Activated T-helper 1 cell treated with anti-CD3 and anti-CD28 coated beads, Interleukin-12 subunit alpha, Interleukin-12 subunit beta, Interleukin-2, Interleukin-4 antibody, amounts not matched to agents 30 ng/mL and 10 ng/mL and 1 ng/mL, durations not matched to agents 14 hours and 24 hours and 36 hours (primary cell): ENCODE measurements at regions of chr3 and their contacts with region 1.

Region 1: DNA sequence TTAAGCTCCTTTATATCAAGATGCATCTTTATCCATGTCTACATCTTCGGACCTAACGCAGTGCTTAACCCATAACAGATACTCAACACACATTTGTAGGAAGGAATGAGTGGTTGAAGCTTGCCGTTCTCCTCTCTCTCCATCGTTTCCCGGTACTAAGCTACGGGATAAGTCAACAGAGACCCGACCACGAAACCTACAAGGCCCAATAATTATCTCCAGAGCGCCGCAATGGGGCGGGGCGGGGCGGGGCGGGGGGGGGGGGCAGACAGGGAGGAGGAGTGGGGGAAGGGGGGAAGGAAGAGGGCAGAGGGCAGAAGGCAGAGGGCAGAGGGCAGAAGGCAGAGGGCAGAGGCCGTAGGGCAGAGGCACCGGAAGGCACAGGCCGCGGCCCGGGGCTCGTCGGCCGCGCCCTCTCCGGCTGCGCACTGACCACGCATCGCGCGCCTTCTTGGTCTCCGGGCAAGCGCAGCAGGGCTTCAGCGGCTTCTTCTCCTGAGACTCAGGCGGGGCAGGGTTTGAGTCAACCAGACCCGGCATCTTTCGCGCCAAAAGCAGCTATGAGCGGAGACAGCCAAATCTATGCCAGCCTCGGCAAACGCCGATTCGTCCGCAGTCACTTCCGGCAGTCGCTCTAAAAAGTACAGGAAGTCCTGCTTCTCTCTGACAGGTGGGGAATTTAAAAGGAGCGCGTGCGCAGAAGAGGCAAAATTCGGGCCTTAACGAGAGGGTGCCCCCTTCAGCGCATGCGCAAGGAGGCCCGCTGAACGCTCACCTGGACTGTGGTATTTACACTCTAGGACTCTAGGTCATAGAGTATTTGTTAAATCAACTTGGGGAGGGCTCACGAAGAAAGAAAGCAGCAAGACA is at the start of gene COX17:
- DNase-seq: peak; percentile 95
- H3K4me3 Mint-ChIP-seq: peak within 1 kb of the TSS; percentile 91
- H3K27ac Mint-ChIP-seq: peak within 1 kb of the TSS; percentile 96
- H3K4me1 Mint-ChIP-seq: peaks cover 44% of the 10 kb centered on the region
- H3K27me3 Mint-ChIP-seq: peaks cover 2% of the 10 kb centered on the region
- total RNA-seq, gene COX17: 62.2 and 70.7 TPM in 2 replicates

Region 2: GRCh38 chr3:119145500-119146191 is 531.4 kb before region 1 on chr3 and contains the start of gene TEX55:
- intact Hi-C with region 1: loop called (anchors 1 kb)
- DNase-seq: no peak
- H3K4me3 Mint-ChIP-seq: no peak within 1 kb of the TSS
- H3K27ac Mint-ChIP-seq: no peak within 1 kb of the TSS
- H3K4me1 Mint-ChIP-seq: no peaks in the 10 kb centered on the region
- H3K27me3 Mint-ChIP-seq: no peaks in the 10 kb centered on the region
- total RNA-seq, gene TEX55: not detected in 2 replicates

Region 3: GRCh38 chr3:119322835-119323722 is 353.9 kb before region 1 on chr3:
- intact Hi-C with region 1: loop called (anchors 1 kb)
- DNase-seq: peak; percentile 92
- H3K4me3 Mint-ChIP-seq: peak overlapping the region; percentile 80
- H3K27ac Mint-ChIP-seq: peak overlapping the region; percentile 92
- H3K4me1 Mint-ChIP-seq: peaks cover 52% of the 10 kb centered on the region
- H3K27me3 Mint-ChIP-seq: peaks cover 27% of the 10 kb centered on the region

Region 4: DNA sequence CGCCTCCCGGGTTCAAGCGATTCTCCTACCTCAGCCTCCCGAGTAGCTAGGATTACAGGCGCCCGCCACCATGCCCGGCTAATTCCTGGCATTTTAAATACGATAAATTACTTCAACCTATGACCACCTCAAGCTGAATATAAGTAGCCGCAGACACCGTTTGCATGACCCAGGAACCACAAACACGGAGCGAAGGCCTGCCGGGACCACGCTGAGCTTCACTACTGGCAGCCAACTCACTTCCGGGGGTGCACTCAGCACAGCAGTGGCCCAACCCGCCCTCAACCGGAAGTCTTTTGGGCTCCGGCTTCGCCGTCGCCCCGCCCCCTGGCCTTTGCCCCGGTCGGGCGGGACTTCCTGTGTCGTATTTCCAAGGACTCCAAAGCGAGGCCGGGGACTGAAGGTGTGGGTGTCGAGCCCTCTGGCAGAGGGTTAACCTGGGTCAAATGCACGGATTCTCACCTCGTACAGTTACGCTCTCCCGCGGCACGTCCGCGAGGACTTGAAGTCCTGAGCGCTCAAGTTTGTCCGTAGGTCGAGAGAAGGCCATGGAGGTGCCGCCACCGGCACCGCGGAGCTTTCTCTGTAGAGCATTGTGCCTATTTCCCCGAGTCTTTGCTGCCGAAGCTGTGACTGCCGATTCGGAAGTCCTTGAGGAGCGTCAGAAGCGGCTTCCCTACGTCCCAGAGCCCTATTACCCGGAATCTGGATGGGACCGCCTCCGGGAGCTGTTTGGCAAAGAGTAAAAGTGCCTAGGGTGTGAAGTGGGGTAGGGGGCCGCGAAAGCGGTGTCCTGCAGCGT is 178.6 kb before region 1 on chr3 and contains the start of gene TIMMDC1:
- intact Hi-C with region 1: loop called (anchors 1 kb)
- DNase-seq: peak; percentile 96
- H3K4me3 Mint-ChIP-seq: peak within 1 kb of the TSS; percentile 100
- H3K27ac Mint-ChIP-seq: peak within 1 kb of the TSS; percentile 99
- H3K4me1 Mint-ChIP-seq: peaks cover 33% of the 10 kb centered on the region
- H3K27me3 Mint-ChIP-seq: no peaks in the 10 kb centered on the region
- total RNA-seq, gene TIMMDC1: 124 and 126 TPM in 2 replicates

Region 5: DNA sequence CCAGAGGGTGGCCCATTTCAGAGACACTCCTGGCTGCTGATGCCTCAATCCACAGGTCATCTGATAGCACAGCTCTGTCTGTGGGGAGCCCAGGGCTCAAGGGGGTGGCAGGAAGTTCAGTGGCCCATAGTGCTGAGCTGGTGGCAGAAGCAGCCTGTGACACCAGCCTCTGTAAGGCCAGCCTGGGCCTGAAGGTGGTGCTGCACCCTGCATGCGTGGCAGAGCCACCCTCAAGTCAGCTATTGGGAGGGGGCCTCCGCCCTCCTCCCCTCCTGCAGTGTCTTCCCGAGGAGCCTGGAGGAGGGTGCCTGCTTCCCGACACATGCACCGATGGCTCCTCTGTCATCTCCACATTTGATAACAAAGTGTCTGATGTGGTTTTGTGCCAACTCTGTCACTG is 76.3 kb before region 1 on chr3:
- intact Hi-C with region 1: loop called (anchors 2 kb)
- DNase-seq: no peak
- H3K4me3 Mint-ChIP-seq: no peak overlapping the region
- H3K27ac Mint-ChIP-seq: peak overlapping the region; percentile 61
- H3K4me1 Mint-ChIP-seq: peaks cover 41% of the 10 kb centered on the region
- H3K27me3 Mint-ChIP-seq: no peaks in the 10 kb centered on the region

Region 6: GRCh38 chr3:119715105-119715504 is 38.1 kb after region 1 on chr3:
- intact Hi-C with region 1: no loop called
- DNase-seq: no peak
- H3K4me3 Mint-ChIP-seq: no peak overlapping the region
- H3K27ac Mint-ChIP-seq: no peak overlapping the region
- H3K4me1 Mint-ChIP-seq: no peaks in the 10 kb centered on the region
- H3K27me3 Mint-ChIP-seq: peaks cover 5% of the 10 kb centered on the region

Region 7: DNA sequence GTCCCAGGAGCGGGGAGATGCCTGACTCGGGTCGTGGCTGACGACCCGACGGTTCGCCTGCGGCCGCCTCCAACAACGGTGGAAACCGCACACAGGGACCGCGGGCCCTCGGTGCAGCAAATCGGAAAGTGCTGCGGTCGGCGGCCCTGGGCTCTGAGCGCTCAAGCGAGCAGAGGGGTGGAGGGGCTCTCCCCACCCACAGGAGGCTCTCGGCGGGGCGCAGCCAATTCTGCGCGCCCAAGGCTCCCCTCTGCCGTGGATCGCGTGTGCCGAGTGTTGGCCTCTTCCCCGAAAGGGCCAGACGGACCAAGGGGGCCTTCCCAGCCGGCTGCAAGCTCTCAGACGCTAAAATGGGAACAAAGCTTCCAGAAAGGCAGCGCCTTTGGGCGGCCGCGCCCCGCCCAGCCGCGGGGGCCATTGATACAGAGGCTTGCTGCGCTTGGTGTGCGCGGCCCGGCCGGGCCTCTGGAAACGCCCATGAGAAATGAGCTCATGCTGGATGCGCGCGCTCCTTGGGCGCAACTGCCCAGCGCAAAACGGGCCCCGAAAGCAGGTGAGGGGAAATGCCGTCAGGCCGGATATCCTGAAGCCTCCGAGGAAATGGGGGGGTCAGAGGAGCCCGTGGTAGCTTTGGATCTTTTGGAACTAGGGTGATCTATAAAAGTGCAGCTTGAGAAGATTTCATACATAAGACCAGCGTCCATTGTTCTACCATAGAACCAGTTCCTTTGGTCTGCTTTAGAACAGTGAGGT is 418.4 kb after region 1 on chr3:
- intact Hi-C with region 1: loop called (anchors 1 kb)
- DNase-seq: peak; percentile 91
- H3K4me3 Mint-ChIP-seq: no peak overlapping the region
- H3K27ac Mint-ChIP-seq: no peak overlapping the region
- H3K4me1 Mint-ChIP-seq: peaks cover 19% of the 10 kb centered on the region
- H3K27me3 Mint-ChIP-seq: no peaks in the 10 kb centered on the region